MCF 10A (cell line): ENCODE measurements at regions of chr2 and their contacts with region 1.

Region 1: DNA sequence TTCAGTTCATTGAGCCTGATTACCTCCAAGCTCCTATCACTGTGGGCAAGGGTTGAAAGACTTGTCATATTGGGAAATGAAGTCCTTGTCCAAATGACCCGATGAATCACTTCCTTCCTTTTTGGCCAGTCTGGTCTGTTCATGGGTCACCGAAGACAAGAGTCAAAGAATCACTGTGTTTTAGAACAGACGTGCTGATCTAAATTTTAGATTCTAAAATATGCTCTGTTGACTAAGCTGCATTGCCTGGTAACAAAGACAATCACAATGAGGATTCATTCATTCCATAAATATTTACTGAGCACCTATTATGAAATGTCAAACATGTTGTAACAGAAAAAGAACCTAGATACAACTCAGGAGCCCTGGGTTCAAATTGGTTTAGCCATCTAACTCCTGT is 99.4 kb upstream of the RND3 start:
- DNase-seq: peak; percentile 67
- H3K4me3 Mint-ChIP-seq: no peak overlapping the region
- H3K27ac Mint-ChIP-seq: peak overlapping the region; percentile 57
- H3K4me1 Mint-ChIP-seq: no peaks in the 10 kb centered on the region
- H3K27me3 Mint-ChIP-seq: no peaks in the 10 kb centered on the region
- CTCF ChIP-seq: no peak

Region 2: DNA sequence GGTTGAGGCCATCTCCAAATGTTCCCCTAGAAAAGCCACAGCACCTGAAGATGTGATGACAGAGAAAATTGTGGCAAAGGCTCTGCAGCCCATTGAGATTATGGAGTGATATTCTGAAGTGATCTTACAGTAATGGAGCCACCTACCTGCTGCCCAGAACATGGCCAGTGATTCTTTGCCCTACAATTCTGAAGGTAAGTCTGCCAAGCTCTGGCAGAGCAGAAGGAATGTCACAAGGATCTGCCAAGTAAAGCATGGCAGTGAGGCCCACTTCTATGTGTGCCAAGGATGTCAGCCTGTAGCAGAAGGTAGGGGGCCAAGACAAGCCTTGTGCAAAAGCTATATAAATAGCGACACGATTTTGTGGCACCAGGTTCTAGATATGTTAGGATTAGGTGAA is 254.5 kb before region 1 on chr2:
- CTCF ChIA-PET with region 1: no interaction called
- POLR2A ChIA-PET with region 1: no interaction called
- intact Hi-C with region 1: no loop called
- DNase-seq: peak; percentile 9
- H3K4me3 Mint-ChIP-seq: no peak overlapping the region
- H3K27ac Mint-ChIP-seq: no peak overlapping the region
- H3K4me1 Mint-ChIP-seq: peaks cover 5% of the 10 kb centered on the region
- H3K27me3 Mint-ChIP-seq: no peaks in the 10 kb centered on the region
- CTCF ChIP-seq: no peak

Region 3: DNA sequence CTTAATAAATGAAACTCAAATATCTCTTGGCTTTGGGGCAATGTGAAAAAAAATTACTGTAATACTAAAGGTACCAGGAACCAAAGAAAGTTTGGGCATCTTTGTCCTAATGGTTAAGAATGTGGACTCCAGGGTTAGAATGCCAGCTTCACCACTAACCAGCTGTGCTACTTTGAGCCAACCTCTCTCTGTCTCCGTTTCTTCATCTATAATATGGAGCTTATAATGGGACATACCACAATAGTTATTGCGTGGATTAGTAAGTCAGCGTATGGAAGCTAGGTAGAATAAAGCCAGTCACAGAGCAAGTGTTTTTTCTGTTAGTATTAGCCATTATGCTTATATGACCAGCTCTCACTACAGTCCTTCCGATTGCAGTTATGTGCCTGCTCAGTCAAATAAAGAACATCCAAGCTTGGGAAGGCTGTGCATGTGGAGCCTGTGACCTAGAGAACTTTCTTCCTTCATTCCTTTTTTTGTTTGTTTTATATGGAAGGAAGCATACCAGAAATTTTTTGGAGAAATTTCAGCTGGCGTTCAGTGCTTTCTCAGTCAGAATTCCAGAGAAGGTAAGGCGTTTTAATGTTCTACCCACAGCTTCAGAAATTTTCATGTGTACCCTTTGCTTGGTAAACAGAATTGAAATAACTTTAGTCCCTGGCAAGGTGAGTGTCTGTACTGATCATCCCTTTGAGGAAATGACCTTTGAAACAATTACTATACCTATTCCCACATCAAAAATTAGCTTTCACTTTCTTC is 14.6 kb after region 1 on chr2:
- CTCF ChIA-PET with region 1: interaction called, 5 read pairs
- POLR2A ChIA-PET with region 1: interaction called, 12 read pairs
- intact Hi-C with region 1: no loop called
- DNase-seq: no peak
- H3K4me3 Mint-ChIP-seq: no peak overlapping the region
- H3K27ac Mint-ChIP-seq: peak overlapping the region; percentile 63
- H3K4me1 Mint-ChIP-seq: peaks cover 7% of the 10 kb centered on the region
- H3K27me3 Mint-ChIP-seq: no peaks in the 10 kb centered on the region
- CTCF ChIP-seq: no peak

Region 4: DNA sequence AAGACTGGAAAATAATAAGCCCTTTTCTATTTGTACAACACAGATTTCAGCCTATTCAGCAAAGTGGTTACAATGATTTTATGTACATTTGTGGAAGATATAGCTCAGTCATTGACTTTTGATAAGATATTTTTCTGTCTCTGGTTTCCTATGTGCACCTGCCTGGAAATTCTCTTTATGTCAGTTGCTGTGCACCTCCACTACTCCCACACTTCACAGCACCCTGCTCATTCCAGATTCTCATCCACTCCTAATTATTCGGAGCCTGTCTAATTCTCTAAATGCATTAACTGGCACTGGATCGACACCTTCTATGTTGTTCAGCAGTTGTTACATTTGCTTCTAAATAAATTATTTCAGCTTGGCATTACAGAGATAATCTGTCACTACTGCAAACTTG is 175.7 kb after region 1 on chr2:
- CTCF ChIA-PET with region 1: no interaction called
- POLR2A ChIA-PET with region 1: no interaction called
- intact Hi-C with region 1: no loop called
- DNase-seq: no peak
- H3K4me3 Mint-ChIP-seq: no peak overlapping the region
- H3K27ac Mint-ChIP-seq: no peak overlapping the region
- H3K4me1 Mint-ChIP-seq: no peaks in the 10 kb centered on the region
- H3K27me3 Mint-ChIP-seq: no peaks in the 10 kb centered on the region
- CTCF ChIP-seq: no peak